ENCODE measurements at regions of chr3 and their contacts with region 1.

Region 1: DNA sequence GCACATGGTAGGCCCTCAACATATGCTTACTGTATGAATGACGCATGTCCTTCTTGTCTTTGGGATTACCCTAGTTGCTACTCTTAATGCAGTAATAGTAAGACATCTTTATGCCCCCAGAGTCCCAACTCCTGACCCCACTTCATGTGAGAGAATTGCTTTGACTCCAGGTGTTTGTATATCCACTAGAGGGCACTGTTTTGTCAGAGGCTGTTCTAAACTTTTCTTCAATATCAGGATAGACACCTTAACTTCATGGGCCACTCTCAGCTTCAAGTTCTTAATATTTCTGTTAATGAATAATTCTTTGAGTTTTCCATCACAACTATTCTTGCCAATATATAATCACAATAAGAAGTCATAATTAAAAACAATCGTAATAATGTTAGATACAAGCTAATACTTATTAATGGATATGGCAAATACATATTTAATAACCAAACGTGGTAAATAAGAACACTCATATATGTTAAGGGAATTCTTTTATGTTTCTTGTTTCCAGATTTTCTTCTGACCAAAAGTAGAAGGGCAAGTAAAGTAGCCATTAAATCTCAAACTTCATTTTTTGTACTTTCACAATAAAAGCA is 337.2 kb upstream of the DNAJC19 start:
- DNase-seq: no peak
- ATAC-seq: peak; percentile 69

Region 2: DNA sequence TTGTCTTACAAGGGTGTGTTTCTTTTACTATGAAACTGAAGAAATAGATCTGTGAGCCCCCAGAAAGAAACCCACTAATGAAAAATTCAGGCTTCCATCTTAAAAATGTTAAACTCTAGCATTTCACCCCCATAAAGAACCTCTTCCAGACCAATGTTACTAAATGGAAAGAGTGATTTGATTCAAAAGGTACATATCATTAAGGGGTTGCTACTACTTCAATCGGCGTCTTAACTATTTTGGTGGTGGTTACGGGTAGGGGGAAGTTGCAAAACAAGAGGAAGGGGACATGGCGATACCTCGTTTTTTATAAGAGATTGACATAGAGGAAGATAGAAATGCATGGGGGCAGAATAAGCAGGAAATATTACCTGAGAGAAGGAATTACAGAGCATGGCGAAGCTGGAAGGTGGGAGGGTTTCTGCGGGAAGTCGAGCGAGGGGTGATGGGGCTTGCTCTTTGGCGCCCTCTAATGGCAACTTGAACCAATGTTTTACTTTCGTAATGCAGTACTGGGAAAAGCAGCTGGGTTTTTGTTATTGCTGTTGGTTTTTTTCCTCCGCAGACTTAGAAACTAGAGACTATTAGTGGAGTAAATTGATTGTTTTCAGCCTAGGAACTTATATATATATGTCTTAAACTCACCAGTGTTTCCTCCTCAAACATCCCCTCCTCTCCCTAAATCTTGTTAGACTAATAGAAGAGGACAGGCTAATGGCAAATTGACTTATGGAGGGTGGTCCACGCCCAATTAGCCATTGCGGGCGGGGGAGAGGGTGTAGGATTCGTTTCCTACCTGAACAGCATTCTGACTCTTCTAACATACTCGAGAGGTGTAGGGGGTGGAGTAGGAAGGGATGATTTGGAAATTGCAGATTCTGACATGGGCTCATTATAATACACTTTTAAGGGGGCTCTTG is 373.7 kb after region 1 on chr3:
- intact Hi-C with region 1: loop called (anchors 5 kb)
- DNase-seq: no peak
- ATAC-seq: peak; percentile 91

Measured in Right ventricle myocardium superior (tissue), 1 donor.